PC-9 (cell line): ENCODE measurements at regions of chr6 and their contacts with region 1.

Region 1: DNA sequence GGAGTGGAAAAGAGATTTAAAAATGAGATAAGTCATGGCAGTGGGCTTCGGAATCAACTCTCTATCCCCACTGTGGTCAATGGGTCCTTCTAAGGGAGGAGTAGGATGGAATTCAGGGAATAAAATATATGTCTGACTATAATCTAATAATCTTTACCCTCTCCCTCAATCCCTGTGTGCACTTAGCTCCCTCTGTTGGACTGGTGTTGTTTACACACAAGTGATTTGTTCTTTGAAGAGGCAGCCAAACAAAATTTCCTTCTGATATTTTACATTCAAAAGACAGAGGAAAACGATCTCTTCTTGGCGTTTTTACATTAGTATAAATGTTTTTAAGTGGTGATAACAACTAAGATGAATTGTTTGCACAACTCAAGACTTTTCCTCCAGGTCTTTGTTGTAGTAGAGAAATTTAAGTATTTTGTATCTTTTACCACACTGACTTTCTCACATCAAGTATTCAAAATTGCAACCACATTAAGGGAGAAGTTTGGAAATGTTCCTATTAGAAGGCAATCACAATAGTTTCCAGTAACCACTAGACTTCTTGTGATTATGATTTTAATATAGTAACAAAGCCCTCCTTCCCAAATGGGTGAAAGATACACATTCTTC is 317.8 kb downstream of the CENPW start:
- DNase-seq: peak; percentile 3 to 48
- H3K4me3 ChIP-seq: no peak overlapping the region
- H3K27ac ChIP-seq: no peak overlapping the region
- H3K4me1 ChIP-seq: no peaks in the 10 kb centered on the region
- H3K27me3 ChIP-seq: no peaks in the 10 kb centered on the region
- CTCF ChIP-seq: peak; percentile 86

Region 2: GRCh38 chr6:126033696-126034095 is 624.0 kb before region 1 on chr6:
- CTCF ChIA-PET with region 1: no interaction called
- POLR2A ChIA-PET with region 1: no interaction called
- intact Hi-C with region 1: loop called (anchors 10 kb)
- DNase-seq: peak in 1 of 2 experiments; percentile 59
- H3K4me3 ChIP-seq: no peak overlapping the region
- H3K27ac ChIP-seq: no peak overlapping the region
- H3K4me1 ChIP-seq: peaks cover 7% of the 10 kb centered on the region; the same call in 1 of the 2 replicates
- H3K27me3 ChIP-seq: no peaks in the 10 kb centered on the region
- CTCF ChIP-seq: peak; percentile 73

Region 3: DNA sequence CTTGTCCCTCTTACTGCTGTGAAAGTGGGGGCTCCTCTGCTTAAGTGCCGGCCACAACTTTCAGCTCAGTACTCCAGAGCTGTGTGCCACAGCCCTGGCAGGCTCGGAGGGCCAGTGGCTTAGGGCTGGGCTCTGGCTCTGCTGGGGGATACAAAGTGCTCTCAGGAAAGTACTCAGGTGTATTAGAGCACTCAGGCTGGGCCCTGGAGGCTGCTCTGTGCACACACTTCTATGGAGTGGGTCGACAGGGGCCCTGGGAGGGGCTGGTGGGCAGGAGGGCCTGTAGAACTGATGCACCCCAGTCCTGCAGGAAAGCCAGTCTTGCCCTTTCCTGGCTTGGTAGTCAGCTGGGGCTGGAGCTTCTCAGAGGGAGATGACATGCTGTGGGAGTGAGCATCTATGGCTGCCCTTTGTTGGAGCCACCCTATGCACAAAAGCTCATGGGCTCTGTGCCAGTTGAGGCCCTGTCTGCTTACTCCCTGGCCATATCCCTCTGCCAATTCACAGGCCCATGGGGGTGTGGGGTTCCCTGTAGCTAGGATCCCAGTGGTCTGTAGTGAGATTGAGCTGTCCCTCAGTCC is 295.7 kb before region 1 on chr6:
- CTCF ChIA-PET with region 1: interaction called, 3 read pairs
- POLR2A ChIA-PET with region 1: no interaction called
- intact Hi-C with region 1: loop called (anchors 2 kb)
- DNase-seq: no peak
- H3K4me3 ChIP-seq: no peak overlapping the region
- H3K27ac ChIP-seq: no peak overlapping the region
- H3K4me1 ChIP-seq: no peaks in the 10 kb centered on the region
- H3K27me3 ChIP-seq: no peaks in the 10 kb centered on the region
- CTCF ChIP-seq: no peak

Region 4: DNA sequence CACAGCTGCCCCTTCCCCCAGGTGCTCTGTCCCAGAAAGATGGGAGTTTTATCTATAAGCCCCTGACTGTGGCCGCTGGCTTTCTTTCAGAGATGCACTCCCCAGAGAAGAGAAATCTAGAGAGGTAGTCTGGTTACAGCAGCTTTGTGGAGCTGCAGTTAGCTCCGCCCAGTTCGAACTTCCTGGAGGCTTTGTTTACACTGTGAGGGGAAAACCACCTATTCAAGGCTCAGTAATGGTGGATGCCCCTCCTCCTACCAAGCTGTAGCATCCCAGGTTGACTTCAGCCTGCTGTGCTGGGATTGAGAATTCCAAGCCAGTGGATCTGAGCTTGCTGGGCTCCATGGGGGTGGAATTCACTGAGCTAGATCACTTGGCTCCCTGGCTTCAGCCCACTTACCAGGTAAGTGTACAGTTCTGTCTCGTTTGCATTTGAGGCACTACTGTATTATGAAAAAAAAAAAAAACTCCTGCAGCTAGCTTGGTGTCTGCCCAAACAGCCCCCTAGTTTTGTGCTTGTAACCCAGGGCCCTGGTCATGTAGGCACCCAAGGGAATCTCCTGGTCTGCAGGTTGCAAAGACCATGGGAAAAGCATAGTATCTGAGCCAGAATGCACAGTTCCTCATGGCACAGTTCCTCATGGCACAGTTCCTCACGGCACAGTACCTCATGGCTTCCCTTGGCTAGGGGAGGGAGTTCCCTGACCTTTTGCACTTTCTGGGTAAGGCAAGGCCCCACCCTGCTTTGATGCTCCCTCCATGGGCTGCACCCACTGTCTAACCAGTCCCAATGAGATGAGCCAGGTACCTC is 42.8 kb before region 1 on chr6:
- CTCF ChIA-PET with region 1: no interaction called
- POLR2A ChIA-PET with region 1: no interaction called
- intact Hi-C with region 1: loop called (anchors 2 kb)
- DNase-seq: no peak
- H3K4me3 ChIP-seq: no peak overlapping the region
- H3K27ac ChIP-seq: no peak overlapping the region
- H3K4me1 ChIP-seq: no peaks in the 10 kb centered on the region
- H3K27me3 ChIP-seq: no peaks in the 10 kb centered on the region
- CTCF ChIP-seq: no peak